PC-3 (cell line): ENCODE measurements at regions of chr2 and their contacts with region 1.

Region 1: GRCh38 chr2:156697906-156698305 is 261.7 kb downstream of the GPD2 start:
- DNase-seq: no peak
- ATAC-seq: no peak
- H3K4me3 ChIP-seq: no peak overlapping the region
- H3K27ac ChIP-seq: no peak overlapping the region
- H3K4me1 ChIP-seq: no peaks in the 10 kb centered on the region
- H3K27me3 ChIP-seq: no peaks in the 10 kb centered on the region
- CTCF ChIP-seq: no peak

Region 2: DNA sequence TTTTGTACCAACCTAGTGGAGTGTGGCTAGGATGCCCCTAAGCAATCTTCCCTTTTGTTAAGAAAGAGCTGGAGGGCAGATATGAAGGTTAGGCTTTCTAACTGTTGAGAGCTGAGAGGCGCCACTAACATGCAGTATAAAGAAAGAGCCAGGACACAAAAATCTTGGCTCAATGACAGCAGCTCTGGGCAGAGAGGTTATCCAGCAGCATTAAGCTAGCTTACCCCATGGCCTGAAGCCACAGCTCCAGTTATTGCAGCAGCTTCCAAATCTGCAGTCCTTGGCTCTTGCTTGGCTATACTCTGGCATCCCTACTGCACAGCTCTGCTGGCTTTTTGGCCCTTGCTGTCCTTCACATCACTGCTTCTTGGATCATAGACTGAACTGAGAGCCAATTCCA is 48.3 kb before region 1 on chr2:
- CTCF ChIA-PET with region 1: no interaction called
- POLR2A ChIA-PET with region 1: no interaction called
- intact Hi-C with region 1: no loop called
- DNase-seq: no peak
- ATAC-seq: no peak
- H3K4me3 ChIP-seq: no peak overlapping the region
- H3K27ac ChIP-seq: no peak overlapping the region
- H3K4me1 ChIP-seq: peaks cover 17% of the 10 kb centered on the region; the same call in 1 of the 2 replicates
- H3K27me3 ChIP-seq: no peaks in the 10 kb centered on the region
- CTCF ChIP-seq: no peak

Region 3: GRCh38 chr2:156727867-156728266 is 30.0 kb after region 1 on chr2:
- CTCF ChIA-PET with region 1: no interaction called
- POLR2A ChIA-PET with region 1: no interaction called
- intact Hi-C with region 1: loop called (anchors 1 kb)
- DNase-seq: no peak
- ATAC-seq: no peak
- H3K4me3 ChIP-seq: no peak overlapping the region
- H3K27ac ChIP-seq: no peak overlapping the region
- H3K4me1 ChIP-seq: no peaks in the 10 kb centered on the region
- H3K27me3 ChIP-seq: 0 out of 2 replicates have a peak, but pooled peaks cover 14% of the 10 kb centered on the region
- CTCF ChIP-seq: no peak